ENCODE measurements at regions of chr1 and their contacts with region 1.

Region 1: DNA sequence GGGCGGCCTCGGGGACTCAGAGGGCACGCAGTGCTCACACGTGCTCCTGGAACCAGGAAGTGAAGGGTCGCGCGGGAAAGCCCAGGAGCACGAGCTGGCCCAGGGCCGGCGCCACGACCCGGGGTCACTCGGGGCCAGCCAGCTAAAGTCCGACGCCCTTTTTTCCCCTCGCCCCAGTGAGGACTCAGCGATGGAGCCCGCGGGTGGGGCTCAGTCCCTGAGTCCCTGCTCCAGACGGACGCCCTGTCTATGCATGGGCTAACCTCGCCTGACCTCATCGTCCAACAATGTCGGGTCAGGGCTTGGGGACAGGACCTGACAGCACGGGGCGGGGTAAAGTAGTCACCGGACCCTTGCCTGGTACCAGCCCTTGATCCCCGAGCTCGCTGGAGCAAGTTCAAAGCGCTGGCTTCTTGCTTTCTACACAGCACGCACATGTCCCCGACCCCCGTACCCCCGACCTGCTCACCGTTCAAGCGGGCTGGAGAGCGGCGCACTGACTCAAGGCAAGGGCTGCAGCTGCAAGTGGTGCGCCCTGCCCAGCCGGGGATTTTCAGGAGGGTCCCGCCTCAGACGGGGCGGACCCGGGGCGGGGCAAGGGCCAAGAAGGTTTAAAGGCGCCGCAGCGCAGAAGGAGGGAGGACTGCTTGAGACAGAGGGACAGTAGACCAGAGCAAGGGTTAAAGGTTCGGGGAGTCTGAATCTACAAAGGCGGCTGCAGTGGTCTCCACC is at the start of gene TAGLN2:
- DNase-seq: peak; percentile 60
- ATAC-seq: peak; percentile 73
- H3K4me3 ChIP-seq: peak within 1 kb of the TSS; percentile 82
- H3K27ac ChIP-seq: peak within 1 kb of the TSS; percentile 82
- H3K4me1 ChIP-seq: peaks cover 32% of the 10 kb centered on the region
- H3K27me3 ChIP-seq: no peaks in the 10 kb centered on the region
- CTCF ChIP-seq: no peak
- EP300 ChIP-seq: no peak
- POLR2A ChIP-seq: peak; percentile 99
- RAD21 ChIP-seq: no peak
- polyA plus RNA-seq, gene TAGLN2: 216 to 262 TPM

Region 2: GRCh38 chr1:159936273-159936904 is 11.2 kb after region 1 on chr1:
- CTCF ChIA-PET with region 1: interaction called, 11 read pairs
- POLR2A ChIA-PET with region 1: interaction called, 23 read pairs
- RAD21 ChIA-PET with region 1: interaction called, 12 read pairs
- SMC1A ChIA-PET with region 1: interaction called, 5 read pairs
- in situ Hi-C with region 1: no loop called
- intact Hi-C with region 1: no loop called
- DNase-seq: no peak
- ATAC-seq: peak; percentile 86
- H3K4me3 ChIP-seq: no peak overlapping the region
- H3K27ac ChIP-seq: no peak overlapping the region
- H3K4me1 ChIP-seq: peaks cover 23% of the 10 kb centered on the region
- H3K27me3 ChIP-seq: 0 out of 4 replicates have a peak, but pooled peaks cover 0 to 2% of the 10 kb centered on the region in 2 experiments
- CTCF ChIP-seq: peak; percentile 98; a peak in 5 of 6 replicates
- EP300 ChIP-seq: no peak
- POLR2A ChIP-seq: no peak
- RAD21 ChIP-seq: peak; percentile 87